ENCODE measurements at regions of chr14 and their contacts with region 1.

Region 1: GRCh38 chr14:22099942-22100763 is 426.5 kb upstream of the OR4E1 start:
- DNase-seq: peak; percentile 73
- H3K4me3 Mint-ChIP-seq: no peak overlapping the region
- H3K27ac Mint-ChIP-seq: peak overlapping the region; percentile 75
- H3K4me1 Mint-ChIP-seq: peaks cover 58% of the 10 kb centered on the region
- H3K27me3 Mint-ChIP-seq: no peaks in the 10 kb centered on the region

Region 2: DNA sequence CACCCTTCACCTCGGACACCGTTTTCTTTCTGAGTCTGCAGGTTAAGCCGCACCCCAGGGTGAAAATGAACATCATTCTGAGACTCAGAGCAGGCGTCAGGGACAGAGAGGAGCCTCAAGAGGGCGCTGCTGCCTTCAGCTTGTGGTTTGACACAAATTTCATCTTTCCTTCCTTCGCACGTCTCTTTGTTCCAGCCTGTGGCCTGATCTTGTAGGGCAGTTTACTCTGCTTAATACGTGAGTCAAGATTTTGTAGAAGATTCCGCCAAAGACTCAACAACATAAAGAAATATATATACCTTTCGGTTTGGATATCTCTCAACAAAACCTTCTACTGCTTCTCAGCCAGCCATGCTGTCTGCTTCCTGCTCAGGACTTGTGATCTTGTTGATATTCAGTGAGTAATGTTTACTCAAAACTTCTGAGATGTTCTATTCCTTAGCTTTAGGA is 97.3 kb before region 1 on chr14:
- CTCF ChIA-PET with region 1: interaction called, 11 read pairs
- DNase-seq: peak; percentile 80
- H3K4me3 Mint-ChIP-seq: peak overlapping the region; percentile 70
- H3K27ac Mint-ChIP-seq: peak overlapping the region; percentile 87
- H3K4me1 Mint-ChIP-seq: peaks cover 36% of the 10 kb centered on the region
- H3K27me3 Mint-ChIP-seq: no peaks in the 10 kb centered on the region

Region 3: GRCh38 chr14:22039938-22040775 is 60.0 kb before region 1 on chr14:
- CTCF ChIA-PET with region 1: interaction called, 28 read pairs
- DNase-seq: peak; percentile 72
- H3K4me3 Mint-ChIP-seq: peak overlapping the region; percentile 62
- H3K27ac Mint-ChIP-seq: peak overlapping the region; percentile 73
- H3K4me1 Mint-ChIP-seq: peaks cover 26% of the 10 kb centered on the region
- H3K27me3 Mint-ChIP-seq: no peaks in the 10 kb centered on the region

Region 4: DNA sequence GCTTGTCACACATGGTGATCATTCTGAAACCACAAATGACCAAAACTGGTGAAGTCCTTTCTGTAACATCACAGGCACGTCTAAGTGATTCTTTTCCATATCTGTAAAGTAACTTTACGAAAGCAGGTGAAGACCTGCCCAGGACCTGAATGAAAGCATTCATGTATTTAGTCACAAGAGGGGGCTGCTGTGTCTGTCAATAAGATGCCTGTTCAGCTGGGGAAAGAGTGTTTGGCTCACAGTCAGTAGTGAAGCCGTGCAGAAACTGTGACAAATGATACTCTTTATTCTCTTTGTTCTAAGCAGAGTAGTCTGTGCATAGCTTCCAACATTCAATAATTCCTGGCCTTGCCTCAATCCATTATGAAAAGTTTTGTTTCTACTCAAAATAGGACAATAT is 53.0 kb before region 1 on chr14:
- CTCF ChIA-PET with region 1: interaction called, 28 read pairs
- DNase-seq: peak; percentile 53
- H3K4me3 Mint-ChIP-seq: peak overlapping the region; percentile 33
- H3K27ac Mint-ChIP-seq: peak overlapping the region; percentile 87
- H3K4me1 Mint-ChIP-seq: peaks cover 52% of the 10 kb centered on the region
- H3K27me3 Mint-ChIP-seq: peaks cover 7% of the 10 kb centered on the region

Region 5: GRCh38 chr14:22065347-22065746 is 34.8 kb before region 1 on chr14:
- CTCF ChIA-PET with region 1: interaction called, 10 read pairs
- DNase-seq: no peak
- H3K4me3 Mint-ChIP-seq: peak overlapping the region; percentile 44
- H3K27ac Mint-ChIP-seq: peak overlapping the region; percentile 77
- H3K4me1 Mint-ChIP-seq: peaks cover 49% of the 10 kb centered on the region
- H3K27me3 Mint-ChIP-seq: no peaks in the 10 kb centered on the region

Region 6: GRCh38 chr14:22084393-22085281 is 15.5 kb before region 1 on chr14:
- CTCF ChIA-PET with region 1: interaction called, 19 read pairs
- DNase-seq: no peak
- H3K4me3 Mint-ChIP-seq: peak overlapping the region; percentile 69
- H3K27ac Mint-ChIP-seq: peak overlapping the region; percentile 79
- H3K4me1 Mint-ChIP-seq: peaks cover 42% of the 10 kb centered on the region
- H3K27me3 Mint-ChIP-seq: no peaks in the 10 kb centered on the region

Measured in activated naive CD4-positive, alpha-beta T cell treated with anti-CD3 and anti-CD28 coated beads, Interleukin-2, amount 10 ng/mL, durations not matched to agents 7 days and 5 days (primary cell).